ENCODE measurements at regions of chr22 and their contacts with region 1.

Region 1: GRCh38 chr22:33302049-33302545 is 243.9 kb upstream of the SYN3 start:
- DNase-seq: peak; percentile 67 to 89
- ATAC-seq: peak; percentile 98

Region 2: DNA sequence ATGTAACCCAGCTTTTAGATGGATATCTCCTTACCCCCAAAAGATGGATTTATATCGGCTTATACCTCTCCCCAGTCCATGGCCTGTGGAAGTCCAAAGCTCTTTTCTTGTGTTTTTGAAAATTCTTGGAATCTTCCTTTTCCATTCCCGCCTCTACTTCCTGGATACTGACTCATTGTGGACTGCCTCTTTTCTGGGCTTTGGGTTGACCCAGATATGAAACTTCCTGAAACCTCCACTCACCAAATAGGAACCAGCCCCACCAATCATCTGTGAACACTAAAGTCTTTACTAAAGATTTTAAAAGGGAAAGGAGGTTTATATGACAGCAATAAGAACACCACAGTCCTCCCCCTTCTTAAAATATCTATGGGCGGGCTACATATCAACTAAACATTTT is 80.5 kb before region 1 on chr22:
- intact Hi-C with region 1: no loop called
- DNase-seq: no peak
- ATAC-seq: no peak

Region 3: GRCh38 chr22:33579448-33580093 is 277.5 kb after region 1 on chr22:
- intact Hi-C with region 1: loop called in 1 of 2 experiments (anchors 5 kb)
- DNase-seq: peak; percentile 41 to 65
- ATAC-seq: peak; percentile 87

Measured in left colon (tissue), 2 donors.